Activated T-helper 1 cell treated with anti-CD3 and anti-CD28 coated beads, Interleukin-12 subunit alpha, Interleukin-12 subunit beta, Interleukin-2, Interleukin-4 antibody, amounts not matched to agents 30 ng/mL and 10 ng/mL and 1 ng/mL, durations not matched to agents 14 hours and 24 hours and 36 hours (primary cell): ENCODE measurements at regions of chr12 and their contacts with region 1.

Region 1: GRCh38 chr12:48851883-48852733 is at the start of gene DDX23:
- DNase-seq: peak; percentile 91
- H3K4me3 Mint-ChIP-seq: peak within 1 kb of the TSS; percentile 97
- H3K27ac Mint-ChIP-seq: peak within 1 kb of the TSS; percentile 93
- H3K4me1 Mint-ChIP-seq: peaks cover 31% of the 10 kb centered on the region
- H3K27me3 Mint-ChIP-seq: no peaks in the 10 kb centered on the region
- total RNA-seq, gene DDX23: 120 and 127 TPM in 2 replicates

Region 2: GRCh38 chr12:48489012-48489411 is 363.1 kb before region 1 on chr12:
- intact Hi-C with region 1: no loop called
- DNase-seq: no peak
- H3K4me3 Mint-ChIP-seq: no peak overlapping the region
- H3K27ac Mint-ChIP-seq: no peak overlapping the region
- H3K4me1 Mint-ChIP-seq: no peaks in the 10 kb centered on the region
- H3K27me3 Mint-ChIP-seq: no peaks in the 10 kb centered on the region

Region 3: GRCh38 chr12:48865434-48866290 is 13.6 kb after region 1 on chr12 and contains the start of gene RND1:
- intact Hi-C with region 1: loop called (anchors 1 kb)
- DNase-seq: peak; percentile 84
- H3K4me3 Mint-ChIP-seq: peak within 1 kb of the TSS; percentile 86
- H3K27ac Mint-ChIP-seq: peak within 1 kb of the TSS; percentile 83
- H3K4me1 Mint-ChIP-seq: peaks cover 28% of the 10 kb centered on the region
- H3K27me3 Mint-ChIP-seq: peaks cover 19% of the 10 kb centered on the region
- total RNA-seq, gene RND1: 7.9 and 9.3 TPM in 2 replicates

Region 4: GRCh38 chr12:48882315-48882687 is 30.2 kb after region 1 on chr12:
- intact Hi-C with region 1: no loop called
- DNase-seq: no peak
- H3K4me3 Mint-ChIP-seq: no peak overlapping the region
- H3K27ac Mint-ChIP-seq: no peak overlapping the region
- H3K4me1 Mint-ChIP-seq: peaks cover 10% of the 10 kb centered on the region
- H3K27me3 Mint-ChIP-seq: peaks cover 45% of the 10 kb centered on the region

Region 5: DNA sequence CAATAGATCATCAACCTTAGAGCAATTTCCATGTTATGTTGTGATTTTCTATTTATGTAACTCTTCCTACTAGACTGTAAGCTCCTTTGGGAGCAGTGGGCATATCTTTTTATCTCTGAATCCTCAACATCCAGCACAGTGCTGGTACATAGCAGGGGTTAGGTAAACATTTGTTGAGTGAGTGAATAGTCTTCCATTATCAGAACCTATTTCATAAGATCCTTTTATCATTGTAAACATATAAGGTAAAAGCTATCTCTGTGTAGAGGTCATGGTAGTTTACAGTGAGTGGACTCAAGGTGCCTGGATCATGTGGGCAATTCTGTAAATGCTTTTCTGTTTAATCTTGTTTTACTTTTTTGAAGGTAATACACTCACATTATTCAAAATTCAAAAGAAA is 58.1 kb after region 1 on chr12:
- intact Hi-C with region 1: no loop called
- DNase-seq: no peak
- H3K4me3 Mint-ChIP-seq: no peak overlapping the region
- H3K27ac Mint-ChIP-seq: no peak overlapping the region
- H3K4me1 Mint-ChIP-seq: no peaks in the 10 kb centered on the region
- H3K27me3 Mint-ChIP-seq: peaks cover 6% of the 10 kb centered on the region

Region 6: GRCh38 chr12:48924617-48925303 is 72.7 kb after region 1 on chr12:
- intact Hi-C with region 1: loop called (anchors 1 kb)
- DNase-seq: peak; percentile 38
- H3K4me3 Mint-ChIP-seq: peak overlapping the region; percentile 89
- H3K27ac Mint-ChIP-seq: peak overlapping the region; percentile 81
- H3K4me1 Mint-ChIP-seq: peaks cover 47% of the 10 kb centered on the region
- H3K27me3 Mint-ChIP-seq: no peaks in the 10 kb centered on the region

Region 7: DNA sequence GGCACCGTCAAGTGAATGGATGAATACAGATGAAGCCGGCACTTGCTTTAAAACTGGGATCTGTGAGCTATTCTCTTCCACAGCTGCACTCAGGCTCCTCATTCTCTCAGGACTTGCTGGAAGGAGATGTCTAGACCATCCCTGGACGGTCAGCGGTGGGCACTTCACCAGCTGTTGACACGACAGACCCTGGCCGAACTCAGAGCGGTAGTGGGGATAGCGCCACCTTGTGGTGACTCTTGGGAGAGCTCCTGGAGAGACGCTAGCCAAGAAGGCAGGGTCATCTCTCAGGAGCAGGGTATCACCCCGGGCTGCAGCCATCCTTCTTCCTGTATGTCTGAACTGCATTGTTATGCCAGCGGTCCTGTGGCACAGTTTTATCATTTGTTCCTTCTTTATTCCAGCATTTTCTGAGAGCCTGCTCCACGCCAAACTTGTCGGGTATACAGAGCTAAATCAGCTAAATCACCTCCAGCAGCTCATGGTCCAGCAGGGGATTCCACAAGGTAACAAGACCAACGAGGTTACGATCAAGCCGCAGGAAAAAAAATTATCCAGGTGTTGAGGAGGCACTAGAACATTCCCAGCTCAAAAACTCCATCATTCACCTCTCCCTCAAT is 136.0 kb after region 1 on chr12:
- intact Hi-C with region 1: loop called (anchors 1 kb)
- DNase-seq: peak; percentile 59
- H3K4me3 Mint-ChIP-seq: no peak overlapping the region
- H3K27ac Mint-ChIP-seq: no peak overlapping the region
- H3K4me1 Mint-ChIP-seq: peaks cover 10% of the 10 kb centered on the region
- H3K27me3 Mint-ChIP-seq: peaks cover 76% of the 10 kb centered on the region

Region 8: GRCh38 chr12:49060237-49061156 is 208.4 kb after region 1 on chr12 and contains the start of gene KMT2D:
- intact Hi-C with region 1: loop called (anchors 2 kb)
- DNase-seq: peak; percentile 83
- H3K4me3 Mint-ChIP-seq: peak within 1 kb of the TSS; percentile 95
- H3K27ac Mint-ChIP-seq: peak within 1 kb of the TSS; percentile 95
- H3K4me1 Mint-ChIP-seq: peaks cover 48% of the 10 kb centered on the region
- H3K27me3 Mint-ChIP-seq: no peaks in the 10 kb centered on the region
- total RNA-seq, gene KMT2D: 107 and 109 TPM in 2 replicates

Region 9: DNA sequence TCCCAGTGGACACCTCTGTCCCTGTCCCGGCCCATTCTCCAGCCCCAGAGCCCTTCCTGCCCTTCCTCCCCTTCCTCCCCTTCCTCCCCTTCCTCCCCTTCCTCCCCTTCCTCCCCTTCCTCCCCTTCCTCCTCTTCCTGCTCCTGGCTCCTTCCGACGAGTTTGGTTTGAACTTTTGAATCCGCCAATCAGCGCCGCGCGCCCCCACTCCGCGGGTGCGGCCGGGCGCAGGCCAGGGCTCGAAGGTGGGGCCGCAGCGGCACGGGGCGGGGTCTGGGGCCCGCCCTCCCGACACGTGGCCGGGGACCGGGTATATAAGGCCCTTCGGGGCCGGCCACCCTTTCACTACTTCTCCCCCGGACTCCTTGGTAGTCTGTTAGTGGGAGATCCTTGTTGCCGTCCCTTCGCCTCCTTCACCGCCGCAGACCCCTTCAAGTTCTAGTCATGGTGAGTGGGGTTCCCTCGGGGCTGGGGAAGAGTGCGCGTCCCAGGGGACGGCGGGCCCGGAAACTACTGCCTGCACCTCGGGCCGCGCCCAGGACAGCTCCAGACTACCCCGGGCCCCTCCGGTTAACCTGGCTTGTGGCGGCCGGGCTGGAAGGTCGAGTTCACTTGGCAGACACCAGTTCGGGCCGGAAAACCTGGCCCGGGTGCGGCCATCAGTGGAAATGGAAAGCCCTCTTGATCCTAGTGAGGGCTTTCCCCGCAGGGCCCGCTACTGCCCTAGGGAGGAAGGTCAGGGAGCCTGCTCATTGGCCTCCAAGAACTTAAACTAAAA is 412.8 kb after region 1 on chr12 and contains the start of gene TUBA1C:
- intact Hi-C with region 1: loop called (anchors 10 kb)
- DNase-seq: peak; percentile 92
- H3K4me3 Mint-ChIP-seq: peak within 1 kb of the TSS; percentile 99
- H3K27ac Mint-ChIP-seq: peak within 1 kb of the TSS; percentile 100
- H3K4me1 Mint-ChIP-seq: peaks cover 38% of the 10 kb centered on the region
- H3K27me3 Mint-ChIP-seq: no peaks in the 10 kb centered on the region
- total RNA-seq, gene TUBA1C: 261 and 270 TPM in 2 replicates